Activated naive CD4-positive, alpha-beta T cell treated with anti-CD3 and anti-CD28 coated beads for 36 hours (primary cell): ENCODE measurements at regions of chr12 and their contacts with region 1.

Region 1: DNA sequence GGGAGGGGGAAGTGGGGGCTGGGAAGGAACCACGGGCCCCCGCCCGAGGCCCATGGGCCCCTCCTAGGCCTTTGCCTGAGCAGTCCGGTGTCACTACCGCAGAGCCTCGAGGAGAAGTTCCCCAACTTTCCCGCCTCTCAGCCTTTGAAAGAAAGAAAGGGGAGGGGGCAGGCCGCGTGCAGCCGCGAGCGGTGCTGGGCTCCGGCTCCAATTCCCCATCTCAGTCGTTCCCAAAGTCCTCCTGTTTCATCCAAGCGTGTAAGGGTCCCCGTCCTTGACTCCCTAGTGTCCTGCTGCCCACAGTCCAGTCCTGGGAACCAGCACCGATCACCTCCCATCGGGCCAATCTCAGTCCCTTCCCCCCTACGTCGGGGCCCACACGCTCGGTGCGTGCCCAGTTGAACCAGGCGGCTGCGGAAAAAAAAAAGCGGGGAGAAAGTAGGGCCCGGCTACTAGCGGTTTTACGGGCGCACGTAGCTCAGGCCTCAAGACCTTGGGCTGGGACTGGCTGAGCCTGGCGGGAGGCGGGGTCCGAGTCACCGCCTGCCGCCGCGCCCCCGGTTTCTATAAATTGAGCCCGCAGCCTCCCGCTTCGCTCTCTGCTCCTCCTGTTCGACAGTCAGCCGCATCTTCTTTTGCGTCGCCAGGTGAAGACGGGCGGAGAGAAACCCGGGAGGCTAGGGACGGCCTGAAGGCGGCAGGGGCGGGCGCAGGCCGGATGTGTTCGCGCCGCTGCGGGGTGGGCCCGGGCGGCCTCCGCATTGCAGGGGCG is at the start of gene GAPDH:
- DNase-seq: peak; percentile 90
- H3K4me3 Mint-ChIP-seq: peak within 1 kb of the TSS; percentile 94
- H3K27ac Mint-ChIP-seq: peak within 1 kb of the TSS; percentile 99
- H3K4me1 Mint-ChIP-seq: peaks cover 41% of the 10 kb centered on the region
- H3K27me3 Mint-ChIP-seq: no peaks in the 10 kb centered on the region
- total RNA-seq, gene GAPDH: 6,537 to 6,787 TPM

Region 2: DNA sequence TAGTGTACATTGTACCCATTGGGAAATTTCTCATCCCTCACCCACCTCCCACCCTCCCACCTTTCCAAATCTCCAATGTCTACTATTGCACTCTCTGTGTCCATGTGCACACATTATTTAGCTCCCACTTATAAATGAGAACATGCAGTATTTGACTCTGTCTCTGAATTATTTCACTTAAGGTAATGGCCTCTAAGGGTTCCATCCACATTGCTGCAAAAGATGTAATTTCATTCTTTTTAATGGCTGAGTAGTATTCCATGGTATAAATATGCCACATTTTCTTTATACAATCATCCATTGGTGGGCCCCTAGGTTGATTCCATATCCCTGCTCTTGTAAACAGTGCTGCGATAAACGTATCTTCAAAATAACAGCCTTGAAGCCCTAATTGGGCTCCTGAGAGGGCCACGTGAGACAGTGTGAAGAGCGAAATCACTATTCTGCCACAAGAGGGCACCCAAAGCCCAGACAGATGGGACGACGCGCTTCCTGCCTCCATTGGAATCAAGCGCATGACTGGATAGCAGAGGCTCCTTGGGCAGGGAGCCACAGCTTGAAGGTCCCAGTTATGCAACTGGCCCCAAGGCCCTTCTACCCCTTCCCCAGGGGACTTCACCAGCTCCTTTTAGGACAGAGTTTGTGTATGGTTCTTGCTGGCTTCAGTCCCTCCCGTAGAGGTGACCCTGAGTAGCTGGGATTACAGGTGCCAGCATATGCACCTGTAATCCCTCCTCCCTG is 110.7 kb before region 1 on chr12:
- CTCF ChIA-PET with region 1: interaction called, 35 read pairs
- intact Hi-C with region 1: loop called (anchors 1 kb)
- DNase-seq: peak; percentile 88
- H3K4me3 Mint-ChIP-seq: peak overlapping the region; percentile 52
- H3K27ac Mint-ChIP-seq: peak overlapping the region; percentile 51
- H3K4me1 Mint-ChIP-seq: peaks cover 48% of the 10 kb centered on the region
- H3K27me3 Mint-ChIP-seq: no peaks in the 10 kb centered on the region

Region 3: GRCh38 chr12:6461401-6462233 is 72.5 kb before region 1 on chr12:
- CTCF ChIA-PET with region 1: interaction called, 6 read pairs
- intact Hi-C with region 1: loop called (anchors 2 kb)
- DNase-seq: peak; percentile 93
- H3K4me3 Mint-ChIP-seq: peak overlapping the region; percentile 80
- H3K27ac Mint-ChIP-seq: peak overlapping the region; percentile 97
- H3K4me1 Mint-ChIP-seq: peaks cover 89% of the 10 kb centered on the region
- H3K27me3 Mint-ChIP-seq: no peaks in the 10 kb centered on the region

Region 4: DNA sequence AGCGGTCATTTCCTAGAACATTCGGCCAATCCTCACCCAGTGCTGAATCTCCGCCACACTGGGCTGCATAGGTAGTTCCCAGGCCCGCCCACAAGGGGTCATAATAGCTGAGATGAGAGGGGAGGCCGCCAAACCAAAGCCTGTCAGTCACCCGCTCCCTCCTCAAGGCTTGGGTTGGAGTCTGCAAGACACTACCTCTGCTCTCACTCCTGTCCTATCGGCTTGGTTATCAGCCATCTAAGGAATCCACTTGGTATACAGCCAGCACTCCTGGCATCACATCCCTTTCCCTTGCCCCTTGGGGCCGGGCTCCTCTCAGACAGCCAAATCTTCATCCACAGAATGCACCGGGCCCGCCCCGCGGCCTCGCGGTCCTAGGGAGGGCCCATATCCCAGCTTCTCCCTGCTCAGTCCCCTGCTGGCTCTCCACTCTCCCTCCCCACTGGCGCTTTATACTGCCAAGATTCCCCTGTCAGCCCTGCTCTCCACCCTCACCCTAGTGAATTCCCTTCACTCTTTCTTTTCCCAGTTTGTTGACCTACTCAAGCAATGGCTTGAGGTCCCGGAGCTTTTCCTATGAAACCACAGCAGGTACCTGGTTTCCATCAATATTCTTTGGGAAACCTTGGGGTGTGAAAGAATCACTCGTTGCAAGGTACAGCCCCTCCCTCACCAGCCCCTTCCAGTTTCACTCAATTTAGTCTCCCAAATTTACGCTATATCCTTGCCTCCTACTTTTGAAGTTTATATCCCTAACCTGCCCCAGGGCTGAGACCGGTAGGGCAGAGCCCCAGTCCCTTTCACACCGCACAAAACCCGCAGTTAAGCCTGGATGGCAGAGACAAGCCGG is 20.3 kb after region 1 on chr12:
- CTCF ChIA-PET with region 1: interaction called, 65 read pairs
- intact Hi-C with region 1: loop called (anchors 1 kb)
- DNase-seq: peak; percentile 86
- H3K4me3 Mint-ChIP-seq: peak overlapping the region; percentile 78
- H3K27ac Mint-ChIP-seq: peak overlapping the region; percentile 1
- H3K4me1 Mint-ChIP-seq: peaks cover 52% of the 10 kb centered on the region
- H3K27me3 Mint-ChIP-seq: no peaks in the 10 kb centered on the region

Region 5: DNA sequence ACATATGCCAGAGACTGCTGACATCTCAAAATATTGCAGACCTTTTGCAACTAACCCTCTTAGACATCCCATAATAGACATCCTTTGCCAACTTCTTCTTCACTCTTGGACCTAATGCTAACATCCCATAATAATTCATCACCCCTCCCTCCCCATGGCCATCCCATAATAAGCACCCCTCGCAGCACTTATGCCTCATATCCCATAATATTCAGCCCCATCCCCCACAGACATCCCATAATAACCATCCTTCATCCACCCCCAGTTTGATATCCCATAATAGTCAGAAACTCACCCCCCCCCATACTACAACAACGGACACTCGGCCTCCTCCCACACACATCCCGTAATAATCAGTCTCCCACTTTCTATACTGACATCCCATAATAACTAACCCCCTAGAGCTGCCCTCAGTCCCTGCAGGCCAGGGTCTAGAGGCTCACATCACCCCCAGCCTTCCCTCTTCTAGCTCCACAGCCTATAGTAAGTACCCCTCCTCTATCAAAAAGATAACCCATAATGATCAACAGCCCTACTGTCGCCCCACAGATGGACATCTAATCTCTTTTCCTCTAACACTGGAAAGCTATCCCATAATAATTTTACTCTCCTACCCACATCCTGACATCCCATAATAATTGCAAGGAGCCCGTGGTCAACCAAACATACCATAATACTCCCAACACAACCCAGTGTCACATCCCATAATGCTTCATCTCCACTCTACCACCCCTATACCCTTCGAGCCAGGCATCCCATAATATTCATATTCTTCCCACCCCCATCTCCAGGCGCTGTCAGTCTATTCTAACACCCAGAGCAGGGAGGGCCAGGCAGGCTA is 73.9 kb after region 1 on chr12:
- CTCF ChIA-PET with region 1: no interaction called
- intact Hi-C with region 1: loop called (anchors 2 kb)
- DNase-seq: peak; percentile 79
- H3K4me3 Mint-ChIP-seq: no peak overlapping the region
- H3K27ac Mint-ChIP-seq: no peak overlapping the region
- H3K4me1 Mint-ChIP-seq: peaks cover 55% of the 10 kb centered on the region
- H3K27me3 Mint-ChIP-seq: no peaks in the 10 kb centered on the region

Region 6: DNA sequence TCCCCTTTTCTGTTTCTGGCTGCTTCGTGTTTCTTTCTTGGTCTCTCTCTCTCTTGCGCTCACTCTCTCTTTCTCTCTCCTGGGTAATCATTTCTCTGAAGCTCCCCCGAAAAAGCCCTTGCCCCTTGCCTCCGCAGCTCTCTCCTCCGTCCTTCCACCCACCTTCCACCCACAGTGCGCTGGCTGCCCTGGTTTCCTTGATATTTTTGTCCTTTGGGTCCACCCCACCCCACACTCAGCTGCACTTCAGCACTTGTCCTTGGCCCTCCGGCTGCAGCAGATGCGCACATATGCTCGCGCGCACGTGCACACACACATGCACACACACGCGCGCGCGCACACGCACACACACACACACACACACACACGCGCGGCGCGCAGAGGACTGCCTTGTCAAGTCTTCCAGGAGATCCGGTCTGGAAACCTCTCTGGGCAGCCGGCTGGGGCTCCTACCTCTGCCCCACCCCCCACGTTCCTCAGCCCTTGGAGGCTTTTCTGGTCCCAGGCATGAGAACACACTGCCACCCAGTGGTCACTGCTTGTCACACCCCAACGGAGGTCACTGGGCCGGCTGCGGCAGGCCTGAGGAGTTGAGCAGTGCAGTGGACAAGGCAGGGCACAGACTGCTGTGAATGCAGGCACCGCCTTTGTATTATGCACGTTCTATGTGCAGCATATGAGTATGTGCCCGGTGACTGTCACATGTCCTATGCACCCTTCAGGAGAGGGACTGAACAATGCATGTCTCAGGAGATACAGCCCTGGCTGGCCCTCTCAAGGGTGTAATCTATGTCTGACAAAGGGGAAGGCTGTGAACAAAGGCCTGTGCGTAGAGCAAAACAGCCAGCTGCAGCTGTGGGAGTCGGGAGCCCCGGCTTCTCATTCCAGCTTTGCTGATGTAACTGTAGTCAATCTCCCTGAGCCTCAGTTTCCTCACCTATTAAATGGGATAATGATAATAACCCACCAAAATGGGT is 244.8 kb after region 1 on chr12:
- CTCF ChIA-PET with region 1: no interaction called
- intact Hi-C with region 1: no loop called
- DNase-seq: peak; percentile 96
- H3K4me3 Mint-ChIP-seq: peak overlapping the region; percentile 82
- H3K27ac Mint-ChIP-seq: peak overlapping the region; percentile 63
- H3K4me1 Mint-ChIP-seq: peaks cover 89% of the 10 kb centered on the region
- H3K27me3 Mint-ChIP-seq: no peaks in the 10 kb centered on the region